ENCODE measurements at regions of chr7 and their contacts with region 1.

Region 1: DNA sequence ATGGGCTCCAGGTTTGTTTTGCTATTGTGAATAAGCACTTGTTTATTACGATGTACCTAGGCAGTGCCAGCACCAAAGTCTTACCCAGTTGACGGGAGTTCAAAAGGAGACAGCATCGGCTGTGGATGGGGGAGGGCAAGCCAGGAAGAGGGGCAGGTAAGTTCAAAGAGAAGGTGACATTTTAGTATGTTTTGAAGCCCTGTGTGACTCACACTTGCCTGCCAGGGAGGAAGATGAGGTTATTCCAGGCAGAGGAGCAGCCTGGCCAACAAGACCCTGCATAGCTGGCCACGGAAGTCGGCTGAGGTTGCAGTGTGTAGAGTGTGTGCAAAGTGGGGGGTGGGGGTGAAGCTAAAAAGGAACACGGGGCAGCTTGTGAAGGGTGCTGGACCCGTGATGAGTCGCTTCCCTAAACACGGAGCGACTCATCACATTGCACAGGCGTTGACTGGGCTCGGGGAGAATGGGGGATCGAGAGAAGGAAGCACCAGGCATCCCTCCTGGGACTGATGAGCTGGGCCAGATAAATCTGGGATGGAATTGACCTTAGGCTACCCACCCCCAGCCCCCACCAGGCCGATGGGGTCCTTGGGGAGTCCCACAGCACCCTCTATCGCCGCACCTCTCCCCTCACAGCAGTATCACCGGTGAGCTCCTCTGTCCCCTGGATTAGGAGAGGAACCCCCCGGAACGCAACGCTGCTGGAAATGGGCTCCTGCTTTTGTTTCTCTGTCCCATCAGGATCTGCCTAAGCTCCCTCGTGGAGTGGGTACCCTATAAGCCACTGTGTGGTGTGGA is 97.9 kb upstream of the IKZF1 start:
- DNase-seq: peak; percentile 8
- H3K4me3 ChIP-seq: no peak overlapping the region
- H3K27ac ChIP-seq: no peak overlapping the region
- H3K4me1 ChIP-seq: no peaks in the 10 kb centered on the region
- H3K27me3 ChIP-seq: peaks cover 5% of the 10 kb centered on the region; the same call in 1 of the 2 replicates

Region 2: GRCh38 chr7:49878627-49879026 is 328.0 kb before region 1 on chr7:
- in situ Hi-C with region 1: no loop called
- DNase-seq: no peak
- H3K4me3 ChIP-seq: no peak overlapping the region
- H3K27ac ChIP-seq: no peak overlapping the region
- H3K4me1 ChIP-seq: no peaks in the 10 kb centered on the region
- H3K27me3 ChIP-seq: no peaks in the 10 kb centered on the region

Region 3: DNA sequence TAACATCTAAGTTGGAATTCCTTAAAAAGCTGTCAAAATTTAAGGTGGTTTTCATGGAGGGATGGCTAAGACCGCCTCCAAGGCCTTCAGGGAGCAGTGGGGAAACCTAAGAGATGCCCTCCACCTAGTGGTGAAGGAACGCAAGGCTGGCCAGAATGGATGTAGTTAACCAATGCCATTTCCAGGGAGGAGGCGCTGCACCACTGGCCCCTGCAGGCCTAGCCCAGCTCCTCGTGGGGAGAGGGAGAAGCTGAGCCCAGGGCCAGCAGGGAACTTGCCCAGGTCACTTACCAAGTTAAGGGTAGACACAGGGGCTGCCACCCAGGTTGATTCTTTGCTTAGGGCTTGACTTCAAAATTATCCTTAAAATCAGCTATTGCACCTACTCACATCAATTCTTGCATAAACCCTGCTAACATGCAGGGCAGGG is 211.4 kb after region 1 on chr7:
- in situ Hi-C with region 1: loop called (anchors 10 kb)
- DNase-seq: peak; percentile 88
- H3K4me3 ChIP-seq: no peak overlapping the region
- H3K27ac ChIP-seq: no peak overlapping the region
- H3K4me1 ChIP-seq: no peaks in the 10 kb centered on the region
- H3K27me3 ChIP-seq: 0 out of 2 replicates have a peak, but pooled peaks cover 14% of the 10 kb centered on the region

Measured in GM23248 (cell line).